Cardiac septum (tissue), 1 donor: ENCODE measurements at regions of chr13 and their contacts with region 1.

Region 1: DNA sequence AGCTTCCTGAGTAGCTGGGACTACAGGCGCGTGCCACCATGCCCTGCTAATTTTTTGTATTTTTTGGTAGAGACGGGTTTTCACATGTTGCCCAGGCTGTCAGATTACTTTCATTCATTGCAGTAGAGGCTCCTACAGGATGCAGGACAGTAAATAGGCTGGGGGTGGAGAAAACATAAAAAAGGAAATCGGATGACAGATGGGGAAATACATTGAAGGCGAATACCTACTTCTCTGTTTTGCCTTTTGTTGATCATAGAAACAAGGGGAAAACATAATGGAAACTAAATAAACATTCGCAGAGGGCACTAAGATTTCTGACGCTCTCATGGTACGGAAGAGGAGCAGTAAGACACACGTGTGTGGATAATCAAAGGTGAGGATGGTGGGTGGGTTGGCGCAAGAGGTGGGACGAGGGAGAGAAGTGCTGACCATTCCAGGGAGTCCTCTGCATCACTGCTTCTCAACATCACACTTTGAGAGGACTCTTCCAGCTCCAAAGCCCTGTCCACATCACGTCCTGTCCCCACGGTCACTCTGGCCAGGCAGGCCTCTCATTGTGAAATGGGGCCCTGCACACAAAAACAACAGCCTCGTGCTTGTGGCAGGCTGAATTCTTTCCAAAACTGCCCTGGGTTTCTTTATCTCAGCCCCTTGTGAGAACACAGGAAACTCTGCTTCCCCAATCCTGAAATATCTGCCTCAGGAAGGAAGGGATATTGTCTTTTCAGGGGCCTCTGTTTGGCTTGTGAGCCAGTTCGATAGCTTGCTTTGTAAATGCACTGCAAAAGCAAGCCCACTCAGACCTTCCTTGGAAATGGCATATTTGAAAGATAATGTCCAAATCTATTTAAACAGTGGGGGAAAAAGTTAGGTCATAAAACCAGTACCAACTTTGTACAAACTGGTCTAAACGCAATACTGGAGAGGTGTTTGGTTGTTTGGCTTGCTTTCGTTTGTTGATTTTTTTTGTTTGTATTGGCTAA is 188.5 kb downstream of the FOXO1 start:
- DNase-seq: peak; percentile 77

Region 2: DNA sequence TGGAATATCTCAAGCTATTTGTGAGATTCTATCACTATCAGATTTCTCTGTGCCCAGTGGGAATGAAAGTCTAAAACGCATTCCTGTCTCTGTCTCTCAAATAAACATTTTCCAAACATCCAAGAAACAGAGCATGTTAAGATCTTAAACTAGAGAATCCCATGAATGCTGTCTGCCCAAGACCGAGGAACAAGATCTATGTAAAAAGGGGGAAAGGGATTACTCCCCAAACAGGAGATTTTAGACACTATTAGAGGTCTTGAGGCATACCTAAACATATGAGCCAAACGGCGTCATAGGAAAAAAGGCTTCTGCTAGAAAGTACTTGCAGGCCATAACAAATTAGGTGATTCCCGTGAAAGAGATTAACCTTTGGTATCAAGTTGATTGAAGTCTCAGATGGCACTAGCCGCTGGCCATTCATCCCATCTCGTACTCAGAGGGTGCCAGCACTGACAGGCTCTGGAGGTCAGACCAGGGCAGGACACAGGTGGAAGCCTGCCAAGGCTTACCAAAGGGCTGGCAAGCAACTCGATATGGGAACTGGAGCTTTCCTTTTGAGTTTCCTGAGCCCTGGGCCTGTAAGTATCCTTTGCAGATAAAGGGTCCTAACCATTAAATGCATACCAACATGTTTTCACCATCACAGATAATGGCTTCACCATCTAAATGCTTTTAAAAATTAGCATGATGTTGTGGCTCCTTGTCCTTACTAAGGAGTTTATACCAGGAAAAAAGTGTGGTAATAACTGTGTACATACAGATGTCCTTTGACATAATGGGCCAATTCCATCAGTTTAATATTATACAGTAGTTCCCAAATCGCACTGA is 36.7 kb before region 1 on chr13:
- intact Hi-C with region 1: loop called (anchors 5 kb)
- DNase-seq: peak; percentile 88

Region 3: DNA sequence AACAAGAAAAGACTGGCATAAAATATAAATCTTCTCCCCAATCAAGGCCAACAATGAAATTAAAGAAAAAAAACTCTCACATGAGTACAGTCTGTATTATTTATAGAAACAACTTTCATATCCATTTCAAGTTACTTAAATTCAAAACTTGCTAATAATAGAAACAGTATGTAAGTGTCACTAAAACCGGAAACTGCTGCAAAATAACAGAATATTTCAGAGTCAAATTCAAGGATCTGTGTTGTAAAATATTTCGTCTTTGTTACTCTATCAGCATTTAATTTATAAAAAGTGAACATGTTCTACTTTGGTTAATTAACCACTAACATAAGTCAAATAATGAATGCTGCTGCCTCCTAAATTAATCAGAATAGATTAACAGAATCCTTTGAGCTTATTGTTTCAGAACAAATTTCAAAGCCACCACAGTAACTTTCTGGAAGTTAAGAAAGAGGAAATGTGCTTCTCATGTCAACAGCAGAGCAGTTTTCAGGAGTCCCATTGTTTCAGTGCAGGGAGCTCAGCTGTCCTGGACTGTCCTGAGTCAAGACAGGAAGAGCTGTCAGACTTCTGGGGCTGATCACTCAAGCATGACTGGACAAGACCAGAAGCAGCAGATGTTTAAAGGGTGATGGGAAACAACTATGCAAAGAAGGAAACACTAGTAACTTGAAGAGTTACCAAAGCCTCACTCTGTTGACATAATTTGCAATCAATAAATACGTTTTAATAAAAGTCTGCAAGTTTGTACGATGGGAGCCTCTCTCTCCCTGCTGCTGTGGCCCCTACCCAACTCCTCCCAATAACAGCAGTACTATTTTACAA is 111.6 kb after region 1 on chr13:
- intact Hi-C with region 1: loop called (anchors 5 kb)
- DNase-seq: peak; percentile 80